Colonic mucosa (tissue), 4 donors: ENCODE measurements at regions of chr10 and their contacts with region 1.

Region 1: GRCh38 chr10:33008499-33009243 is 50.6 kb upstream of the ITGB1 start:
- DNase-seq: peak; percentile 83
- H3K4me3 ChIP-seq: no peak overlapping the region
- H3K27ac ChIP-seq: no peak overlapping the region
- H3K4me1 ChIP-seq: no peaks in the 10 kb centered on the region
- H3K27me3 ChIP-seq: no peaks in the 10 kb centered on the region
- CTCF ChIP-seq: peak; percentile 99

Region 2: DNA sequence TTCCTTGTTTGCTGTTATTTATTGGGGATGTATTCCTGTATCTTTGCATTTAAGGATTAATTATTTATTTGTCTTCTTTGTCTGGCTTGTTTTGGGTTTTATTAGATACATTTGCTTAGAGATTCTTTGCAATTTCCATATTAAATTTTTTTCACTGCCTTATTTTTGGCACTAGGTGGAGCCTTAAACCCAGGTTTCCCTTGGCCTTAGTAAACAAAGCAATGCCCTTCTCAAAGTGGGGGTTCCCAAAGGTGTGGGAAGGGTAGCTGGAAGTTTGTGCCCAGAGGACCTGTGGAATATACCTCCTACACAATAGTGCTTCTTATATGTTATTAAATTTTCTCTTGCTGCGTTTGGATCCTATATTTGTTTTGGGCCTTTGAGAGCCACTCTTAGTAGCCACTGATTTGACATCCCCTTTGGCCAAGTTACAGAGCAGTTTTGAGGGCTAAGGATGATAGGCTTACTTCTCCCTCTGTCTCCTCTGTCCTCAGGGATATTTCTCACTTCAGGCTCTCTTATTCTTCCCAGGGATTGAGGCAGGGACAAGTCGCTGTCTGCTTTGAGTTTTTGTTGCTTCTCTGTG is 213.0 kb before region 1 on chr10:
- intact Hi-C with region 1: loop called (anchors 2 kb)
- DNase-seq: no peak
- H3K4me3 ChIP-seq: no peak overlapping the region
- H3K27ac ChIP-seq: no peak overlapping the region
- H3K4me1 ChIP-seq: no peaks in the 10 kb centered on the region
- H3K27me3 ChIP-seq: no peaks in the 10 kb centered on the region
- CTCF ChIP-seq: peak; percentile 55

Region 3: GRCh38 chr10:33193057-33193700 is 184.5 kb after region 1 on chr10:
- intact Hi-C with region 1: no loop called
- DNase-seq: peak; percentile 86
- H3K4me3 ChIP-seq: no peak overlapping the region
- H3K27ac ChIP-seq: no peak overlapping the region
- H3K4me1 ChIP-seq: peaks cover 5% of the 10 kb centered on the region
- H3K27me3 ChIP-seq: no peaks in the 10 kb centered on the region
- CTCF ChIP-seq: peak; percentile 72

Region 4: GRCh38 chr10:33334805-33335550 is 326.3 kb after region 1 on chr10:
- intact Hi-C with region 1: no loop called
- DNase-seq: peak; percentile 71
- H3K4me3 ChIP-seq: peak overlapping the region; percentile 65
- H3K27ac ChIP-seq: peak overlapping the region; percentile 73
- H3K4me1 ChIP-seq: peaks cover 3% of the 10 kb centered on the region
- H3K27me3 ChIP-seq: peaks cover 8% of the 10 kb centered on the region
- CTCF ChIP-seq: peak; percentile 22